ENCODE measurements at regions of chr3 and their contacts with region 1.

Region 1: DNA sequence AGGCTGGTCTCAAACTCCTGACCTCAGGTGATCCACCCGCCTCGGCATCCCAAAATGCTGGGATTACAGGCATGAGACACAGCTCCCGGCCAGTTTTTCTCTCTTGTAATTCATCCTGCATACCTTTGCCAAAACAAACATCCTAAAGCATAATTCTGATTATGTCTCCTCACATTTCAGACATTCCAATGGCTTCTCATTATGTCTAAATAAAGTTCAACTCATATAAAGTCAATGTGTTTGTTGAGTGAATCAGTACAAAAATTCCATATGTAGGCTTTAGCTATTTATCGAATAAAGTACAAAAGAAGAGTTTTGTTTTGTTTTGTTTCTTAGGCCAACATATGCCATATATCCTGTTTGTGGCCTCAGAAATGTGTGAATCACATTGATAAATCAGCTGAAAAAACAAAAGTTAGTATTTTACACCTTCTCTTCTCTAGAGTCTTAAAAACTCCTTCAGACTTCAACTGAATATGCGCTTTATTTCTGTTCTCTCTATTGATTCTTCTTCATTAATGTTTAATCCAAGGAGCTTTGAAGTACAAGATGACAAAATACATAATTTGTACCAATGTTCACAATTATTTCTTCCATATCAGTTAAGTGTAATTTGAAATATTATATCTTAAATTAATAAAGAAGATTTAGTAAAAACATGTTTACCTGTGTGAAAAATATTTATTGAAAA is 165.8 kb downstream of the MECOM start:
- DNase-seq: peak; percentile 28 to 99
- H3K4me3 ChIP-seq: no peak overlapping the region
- H3K27ac ChIP-seq: peak overlapping the region; percentile 56
- H3K4me1 ChIP-seq: peaks cover 20% of the 10 kb centered on the region
- H3K27me3 ChIP-seq: no peaks in the 10 kb centered on the region
- CTCF ChIP-seq: no peak

Region 2: GRCh38 chr3:169060042-169060441 is 437.7 kb before region 1 on chr3:
- CTCF ChIA-PET with region 1: no interaction called
- POLR2A ChIA-PET with region 1: no interaction called
- intact Hi-C with region 1: no loop called
- DNase-seq: no peak
- H3K4me3 ChIP-seq: no peak overlapping the region
- H3K27ac ChIP-seq: no peak overlapping the region
- H3K4me1 ChIP-seq: no peaks in the 10 kb centered on the region
- H3K27me3 ChIP-seq: no peaks in the 10 kb centered on the region
- CTCF ChIP-seq: no peak

Region 3: GRCh38 chr3:169241991-169242707 is 255.6 kb before region 1 on chr3:
- CTCF ChIA-PET with region 1: interaction called, 5 read pairs
- POLR2A ChIA-PET with region 1: interaction called, 15 read pairs
- intact Hi-C with region 1: no loop called
- DNase-seq: peak; percentile 33 to 60
- H3K4me3 ChIP-seq: peak overlapping the region; percentile 31; the same call in 1 of the 2 replicates
- H3K27ac ChIP-seq: peak overlapping the region; percentile 71
- H3K4me1 ChIP-seq: peaks cover 29% of the 10 kb centered on the region
- H3K27me3 ChIP-seq: no peaks in the 10 kb centered on the region
- CTCF ChIP-seq: no peak

Region 4: GRCh38 chr3:169509359-169509758 is 11.6 kb after region 1 on chr3:
- CTCF ChIA-PET with region 1: no interaction called
- POLR2A ChIA-PET with region 1: interaction called, 10 read pairs
- intact Hi-C with region 1: no loop called
- DNase-seq: no peak
- H3K4me3 ChIP-seq: no peak overlapping the region
- H3K27ac ChIP-seq: no peak overlapping the region
- H3K4me1 ChIP-seq: no peaks in the 10 kb centered on the region
- H3K27me3 ChIP-seq: no peaks in the 10 kb centered on the region
- CTCF ChIP-seq: no peak

Region 5: GRCh38 chr3:169629895-169630294 is 132.2 kb after region 1 on chr3:
- CTCF ChIA-PET with region 1: no interaction called
- POLR2A ChIA-PET with region 1: interaction called, 23 read pairs
- intact Hi-C with region 1: no loop called
- DNase-seq: no peak
- H3K4me3 ChIP-seq: no peak overlapping the region
- H3K27ac ChIP-seq: no peak overlapping the region
- H3K4me1 ChIP-seq: 0 out of 2 replicates have a peak, but pooled peaks cover 7% of the 10 kb centered on the region
- H3K27me3 ChIP-seq: no peaks in the 10 kb centered on the region
- CTCF ChIP-seq: no peak

Measured in PC-9 (cell line).